ENCODE measurements at regions of chr19 and their contacts with region 1.

Region 1: DNA sequence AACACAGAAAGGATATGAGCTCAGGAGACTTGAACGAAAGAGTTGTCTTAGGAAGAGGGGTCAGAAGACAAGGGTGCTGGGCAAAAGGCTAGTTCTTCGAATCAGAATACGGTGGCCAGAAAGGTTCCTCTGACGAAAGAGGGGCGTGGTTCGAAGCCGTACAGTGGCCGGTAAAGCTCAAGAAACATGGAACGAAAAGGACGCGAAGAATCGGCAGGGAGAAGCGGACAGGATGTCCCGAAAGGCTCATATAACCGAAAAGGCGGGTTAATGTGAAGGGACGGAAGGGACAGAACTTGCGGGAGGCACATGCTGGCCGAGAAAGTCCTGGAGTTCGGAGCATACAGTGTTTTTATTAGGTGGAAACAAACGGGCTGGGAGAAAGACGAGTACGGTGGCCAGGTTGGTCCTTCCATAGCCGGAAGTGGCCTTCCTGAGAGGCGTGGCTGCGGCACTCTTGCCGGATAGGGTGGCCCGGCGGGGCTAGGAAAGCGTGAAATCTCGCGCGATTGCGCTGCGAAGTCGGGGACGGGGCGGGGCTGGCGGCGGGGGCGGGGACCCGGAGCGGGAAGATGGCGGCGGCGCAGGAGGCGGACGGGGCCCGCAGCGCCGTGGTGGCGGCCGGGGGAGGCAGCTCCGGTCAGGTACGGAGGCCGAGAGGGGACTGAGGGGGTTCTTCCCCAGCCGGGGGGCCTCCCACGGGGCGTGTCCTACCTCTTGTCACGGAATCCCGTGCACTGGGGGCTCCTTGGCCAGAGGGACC is at the start of gene CLPTM1:
- DNase-seq: peak; percentile 98
- ATAC-seq: peak; percentile 93
- H3K4me3 Mint-ChIP-seq: peak within 1 kb of the TSS; percentile 85
- H3K27ac Mint-ChIP-seq: peak within 1 kb of the TSS; percentile 95
- H3K4me1 Mint-ChIP-seq: peaks cover 40% of the 10 kb centered on the region
- H3K27me3 Mint-ChIP-seq: no peaks in the 10 kb centered on the region
- total RNA-seq, gene CLPTM1: 73.0 to 74.7 TPM

Region 2: GRCh38 chr19:44903602-44904425 is 51.2 kb before region 1 on chr19:
- CTCF ChIA-PET with region 1: interaction called, 13 read pairs
- DNase-seq: peak; percentile 79
- ATAC-seq: peak; percentile 65
- H3K4me3 Mint-ChIP-seq: no peak overlapping the region
- H3K27ac Mint-ChIP-seq: no peak overlapping the region
- H3K4me1 Mint-ChIP-seq: peaks cover 8% of the 10 kb centered on the region
- H3K27me3 Mint-ChIP-seq: peaks cover 17% of the 10 kb centered on the region

Measured in activated CD8-positive, alpha-beta memory T cell treated with anti-CD3 and anti-CD28 coated beads, Interleukin-2, amount 10 ng/mL, durations not matched to agents 7 days and 5 days (primary cell).